GM23248 (cell line): ENCODE measurements at regions of chr14 and their contacts with region 1.

Region 1: GRCh38 chr14:39376667-39377403 is 55.4 kb downstream of the FBXO33 start:
- DNase-seq: peak; percentile 64
- H3K4me3 ChIP-seq: peak overlapping the region; percentile 47
- H3K27ac ChIP-seq: peak overlapping the region; percentile 79
- H3K4me1 ChIP-seq: peaks cover 52% of the 10 kb centered on the region
- H3K27me3 ChIP-seq: no peaks in the 10 kb centered on the region

Region 2: GRCh38 chr14:39102969-39103957 is 273.6 kb before region 1 on chr14 and contains the start of gene SEC23A:
- in situ Hi-C with region 1: loop called (anchors 10 kb)
- DNase-seq: peak; percentile 90
- H3K4me3 ChIP-seq: peak within 1 kb of the TSS; percentile 98
- H3K27ac ChIP-seq: peak within 1 kb of the TSS; percentile 97
- H3K4me1 ChIP-seq: peaks cover 37% of the 10 kb centered on the region
- H3K27me3 ChIP-seq: no peaks in the 10 kb centered on the region
- total RNA-seq, gene SEC23A: 246 and 295 TPM in 2 replicates

Region 3: GRCh38 chr14:39956372-39956771 is 579.5 kb after region 1 on chr14:
- in situ Hi-C with region 1: no loop called
- DNase-seq: no peak
- H3K4me3 ChIP-seq: no peak overlapping the region
- H3K27ac ChIP-seq: no peak overlapping the region
- H3K4me1 ChIP-seq: no peaks in the 10 kb centered on the region
- H3K27me3 ChIP-seq: no peaks in the 10 kb centered on the region

Region 4: DNA sequence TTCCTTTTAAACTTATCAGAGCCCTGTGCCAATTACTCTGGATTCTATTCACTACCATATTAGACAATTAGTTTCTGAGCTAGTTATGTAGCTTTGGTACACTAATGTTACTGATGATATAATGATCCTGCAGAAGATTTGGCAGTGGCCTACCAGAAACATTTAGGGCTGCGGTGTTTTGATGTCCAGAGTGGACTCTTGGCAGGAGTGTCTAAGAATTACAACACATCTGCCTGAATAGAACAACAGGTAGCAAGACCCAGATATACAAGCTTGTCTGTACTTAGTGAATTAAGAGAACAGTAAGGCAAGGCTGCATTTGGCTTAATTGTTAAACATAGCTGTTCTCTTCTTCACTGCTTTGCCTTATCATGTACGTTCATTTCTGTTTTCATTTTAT is 747.0 kb after region 1 on chr14:
- in situ Hi-C with region 1: no loop called
- DNase-seq: no peak
- H3K4me3 ChIP-seq: no peak overlapping the region
- H3K27ac ChIP-seq: no peak overlapping the region; the same call in 1 of the 2 replicates
- H3K4me1 ChIP-seq: peaks cover 5% of the 10 kb centered on the region; the same call in 1 of the 2 replicates
- H3K27me3 ChIP-seq: no peaks in the 10 kb centered on the region